ENCODE measurements at regions of chr19 and their contacts with region 1.

Region 1: DNA sequence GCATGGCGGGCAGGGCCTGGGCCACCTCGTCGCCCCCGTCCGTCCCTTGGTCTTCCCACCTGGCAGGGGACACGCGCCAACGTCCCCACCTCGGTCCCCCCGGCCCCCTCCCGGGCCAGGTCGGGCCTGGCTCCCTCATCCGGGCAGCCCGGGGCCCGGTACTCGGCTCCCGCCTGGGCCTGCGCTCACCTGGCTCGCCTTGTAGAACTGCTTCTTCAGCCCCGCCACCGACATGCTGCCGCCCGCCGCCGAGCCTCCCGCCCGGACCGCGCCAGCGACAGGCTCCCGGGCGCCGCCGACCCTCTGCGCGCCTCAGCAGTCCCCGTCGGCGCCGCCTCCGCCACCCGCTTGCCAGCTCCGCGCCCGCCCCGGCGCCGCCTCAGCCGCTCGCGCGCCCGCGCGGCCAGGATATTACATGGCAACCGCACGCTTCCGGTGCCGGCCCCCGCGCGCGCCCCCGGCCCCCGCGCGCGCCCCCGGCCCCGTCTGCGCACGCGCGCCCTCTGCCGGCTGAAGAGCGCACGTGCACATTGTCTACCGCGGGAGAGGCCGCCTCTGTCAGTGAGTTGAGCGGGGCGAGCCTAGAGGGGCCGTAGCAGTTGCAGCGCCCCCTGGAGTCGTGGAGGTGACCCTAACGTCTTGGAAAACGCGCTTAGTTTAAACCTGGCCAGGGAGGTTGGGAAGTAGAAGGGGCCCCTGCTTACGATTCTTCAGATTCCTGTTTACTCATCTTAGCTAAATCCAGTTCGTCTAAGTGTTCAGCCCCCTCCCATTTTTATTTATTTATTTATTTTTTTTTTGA is at the start of gene SH3GL1:
- DNase-seq: peak; percentile 96
- total RNA-seq, gene SH3GL1: 22.0 TPM

Region 2: DNA sequence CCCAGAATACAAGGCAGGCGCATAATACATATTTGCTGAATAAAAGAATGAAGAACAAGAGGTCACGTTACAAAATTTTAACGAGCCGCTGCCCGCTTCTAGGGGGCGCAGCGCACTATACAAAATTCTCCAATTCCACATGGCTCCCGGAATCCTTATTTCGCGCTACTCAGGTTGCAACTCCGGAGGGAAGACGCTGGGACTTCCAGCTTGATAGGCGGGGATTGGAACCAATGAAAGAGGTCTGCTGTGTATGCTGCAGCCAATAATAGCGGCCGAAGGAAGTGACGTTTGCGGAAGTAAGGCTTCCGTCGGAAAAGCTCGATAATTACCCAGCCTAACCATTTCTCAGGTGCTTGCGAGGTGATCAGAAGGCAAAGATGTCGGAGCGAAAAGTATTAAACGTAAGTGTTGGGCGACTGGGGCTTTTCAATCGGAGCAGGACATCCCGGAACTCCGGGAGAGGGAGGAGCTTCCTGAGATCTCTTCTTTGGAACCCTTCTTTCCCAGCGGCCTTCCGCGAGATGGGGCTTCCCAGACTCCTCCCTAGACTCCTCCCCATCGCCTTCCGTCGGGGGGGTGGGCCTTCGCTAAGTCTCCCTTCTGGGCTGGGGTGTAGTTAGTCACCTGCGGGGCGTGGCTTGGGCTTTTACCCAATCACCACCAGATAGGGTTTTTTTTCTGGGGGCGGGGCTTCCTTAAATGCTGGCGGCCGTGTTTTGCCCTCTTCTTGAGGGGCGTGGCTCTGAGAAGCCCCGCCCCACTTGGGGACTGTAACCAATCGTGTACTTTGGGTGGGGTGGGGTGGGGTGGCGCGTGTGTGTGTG is 153.4 kb before region 1 on chr19 and contains the start of gene YJU2:
- intact Hi-C with region 1: loop called (anchors 5 kb)
- DNase-seq: peak; percentile 97
- total RNA-seq, gene YJU2: 11.7 TPM

Region 3: DNA sequence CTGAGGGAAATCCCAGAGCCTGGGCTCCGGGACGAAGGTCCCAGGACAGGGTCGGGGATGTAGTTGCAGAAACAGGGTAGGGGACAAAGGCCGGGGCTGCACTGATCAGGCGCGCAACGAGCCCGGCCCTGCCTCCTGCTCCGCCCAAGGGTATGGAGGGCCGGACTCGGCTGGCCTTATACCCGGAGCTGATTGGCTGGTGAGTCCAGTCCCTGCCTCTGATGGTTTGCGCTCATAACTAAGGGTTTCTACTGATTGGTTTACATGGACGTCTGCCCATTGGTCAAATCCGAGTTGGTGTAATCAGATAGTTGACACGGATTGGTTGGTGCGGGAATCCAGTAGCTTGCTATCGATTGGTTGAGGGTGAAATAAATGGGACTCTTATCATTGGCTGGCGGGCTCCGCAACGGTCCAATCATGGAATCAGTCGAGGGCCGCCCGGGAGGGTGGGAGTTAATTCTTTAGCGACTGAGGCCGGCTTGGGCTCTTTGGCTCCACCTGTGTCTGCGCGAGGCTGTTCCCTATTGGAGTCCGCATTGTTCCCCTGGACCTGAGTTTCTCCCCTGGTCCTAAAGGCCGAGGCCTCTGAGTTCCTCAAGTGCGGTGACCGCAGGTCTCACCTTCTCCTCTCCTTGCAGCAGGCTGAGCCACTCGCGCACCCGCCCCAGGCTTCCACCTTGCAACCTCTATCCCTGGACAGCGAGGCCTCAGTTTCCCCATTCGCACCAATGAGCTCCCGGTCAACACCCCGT is 57.5 kb before region 1 on chr19:
- intact Hi-C with region 1: loop called (anchors 5 kb)
- DNase-seq: peak; percentile 98

Region 4: DNA sequence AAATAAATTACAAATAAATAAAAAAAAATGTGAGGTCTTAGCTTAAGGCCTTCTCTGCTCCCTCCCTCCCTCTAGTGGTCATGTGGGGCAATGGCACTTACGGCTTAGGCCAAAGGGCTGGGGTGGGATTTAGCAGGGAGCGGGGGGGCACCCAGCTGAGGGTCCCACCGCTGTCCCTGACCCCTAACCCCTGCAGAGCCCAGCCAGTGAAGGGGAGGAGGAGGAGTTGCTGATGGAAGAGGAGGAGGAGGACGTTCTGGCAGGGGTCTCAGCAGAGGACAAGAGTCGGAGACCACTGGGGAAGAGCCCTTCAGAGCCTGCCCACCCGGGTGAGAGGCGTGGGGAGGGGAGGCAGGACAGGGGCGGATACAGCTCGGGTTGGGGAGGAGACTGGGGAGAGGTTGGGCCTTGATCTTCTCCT is 47.6 kb before region 1 on chr19:
- intact Hi-C with region 1: loop called (anchors 5 kb)
- DNase-seq: no peak

Region 5: GRCh38 chr19:4369888-4370260 is 30.5 kb before region 1 on chr19:
- intact Hi-C with region 1: loop called (anchors 5 kb)
- DNase-seq: no peak

Region 6: DNA sequence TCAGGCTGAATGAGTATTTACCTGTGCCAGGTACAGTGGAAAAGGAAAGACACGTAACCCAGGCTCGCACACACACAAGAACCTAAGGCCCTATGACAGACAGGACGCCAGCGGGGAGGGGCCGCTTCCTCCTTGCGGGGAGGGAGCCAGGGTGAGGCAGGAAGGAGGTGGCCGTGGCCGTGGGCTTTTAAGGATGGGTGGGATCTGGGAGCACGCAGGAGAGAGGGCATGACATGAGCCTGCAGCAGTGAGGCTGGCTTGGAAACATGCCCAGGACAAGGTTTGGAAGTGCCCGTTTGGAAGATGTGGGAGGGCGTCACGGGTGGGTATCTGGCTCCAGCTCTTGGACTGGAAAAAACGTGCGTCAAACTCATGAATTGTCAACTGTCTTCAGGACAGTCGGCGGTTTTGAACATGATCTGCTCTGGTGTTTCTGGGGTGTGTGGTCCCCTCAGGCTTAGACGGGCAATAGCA is 20.0 kb before region 1 on chr19:
- intact Hi-C with region 1: no loop called
- DNase-seq: peak; percentile 87

Region 7: DNA sequence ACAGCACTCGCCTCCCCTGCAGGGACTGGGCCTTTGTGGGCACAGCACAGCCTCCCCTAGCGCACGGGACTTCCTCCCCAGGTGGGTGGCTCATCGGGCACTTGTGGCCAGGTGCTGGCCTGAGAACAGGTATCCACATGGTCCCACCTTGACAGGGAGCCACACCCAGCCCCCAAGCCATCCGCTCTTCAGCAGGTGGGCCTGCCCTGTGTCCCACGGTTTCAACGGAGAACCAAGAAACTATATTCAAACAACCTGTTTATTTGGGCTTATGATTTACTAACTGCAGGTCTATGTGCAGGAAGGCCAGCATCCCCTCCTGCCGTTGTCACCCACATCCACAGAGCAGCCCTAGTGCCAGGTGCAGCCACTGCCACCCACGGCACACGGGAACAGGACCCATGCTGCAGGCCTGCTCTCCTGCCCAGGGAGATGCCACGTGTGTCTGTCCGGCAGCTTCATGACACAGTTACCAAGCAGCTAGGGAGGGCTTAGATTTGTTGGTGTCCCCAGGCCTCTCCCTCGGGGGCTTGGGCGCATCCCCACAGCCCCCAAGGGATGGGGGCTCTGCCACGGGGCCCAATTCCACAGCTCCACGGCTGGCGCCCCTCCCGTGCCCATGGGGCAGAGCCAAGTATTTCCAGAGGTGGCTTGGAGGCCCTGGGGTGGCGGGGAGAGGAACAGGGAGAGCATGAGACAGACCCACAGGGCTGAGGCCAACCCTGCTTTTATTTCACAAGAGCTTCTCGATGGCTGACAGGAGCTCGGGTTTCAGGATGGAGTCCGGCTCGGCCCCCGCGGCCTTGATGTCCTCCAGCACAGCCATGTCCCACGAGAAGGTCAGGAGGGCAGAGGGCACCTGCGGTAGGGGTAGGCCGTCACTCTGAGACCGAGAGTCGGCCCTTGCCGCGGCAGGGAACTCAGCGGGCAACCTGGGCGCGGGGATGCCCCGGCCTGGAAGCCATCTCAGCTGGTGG is 44.7 kb after region 1 on chr19:
- intact Hi-C with region 1: no loop called
- DNase-seq: no peak

Region 8: GRCh38 chr19:4457654-4458395 is 57.5 kb after region 1 on chr19 and contains the start of gene UBXN6:
- intact Hi-C with region 1: loop called (anchors 5 kb)
- DNase-seq: peak; percentile 99
- total RNA-seq, gene UBXN6: 102 TPM

Measured in cardiac septum (tissue), 1 donor.